Thyroid gland (tissue), 4 donors: ENCODE measurements at regions of chr7 and their contacts with region 1.

Region 1: DNA sequence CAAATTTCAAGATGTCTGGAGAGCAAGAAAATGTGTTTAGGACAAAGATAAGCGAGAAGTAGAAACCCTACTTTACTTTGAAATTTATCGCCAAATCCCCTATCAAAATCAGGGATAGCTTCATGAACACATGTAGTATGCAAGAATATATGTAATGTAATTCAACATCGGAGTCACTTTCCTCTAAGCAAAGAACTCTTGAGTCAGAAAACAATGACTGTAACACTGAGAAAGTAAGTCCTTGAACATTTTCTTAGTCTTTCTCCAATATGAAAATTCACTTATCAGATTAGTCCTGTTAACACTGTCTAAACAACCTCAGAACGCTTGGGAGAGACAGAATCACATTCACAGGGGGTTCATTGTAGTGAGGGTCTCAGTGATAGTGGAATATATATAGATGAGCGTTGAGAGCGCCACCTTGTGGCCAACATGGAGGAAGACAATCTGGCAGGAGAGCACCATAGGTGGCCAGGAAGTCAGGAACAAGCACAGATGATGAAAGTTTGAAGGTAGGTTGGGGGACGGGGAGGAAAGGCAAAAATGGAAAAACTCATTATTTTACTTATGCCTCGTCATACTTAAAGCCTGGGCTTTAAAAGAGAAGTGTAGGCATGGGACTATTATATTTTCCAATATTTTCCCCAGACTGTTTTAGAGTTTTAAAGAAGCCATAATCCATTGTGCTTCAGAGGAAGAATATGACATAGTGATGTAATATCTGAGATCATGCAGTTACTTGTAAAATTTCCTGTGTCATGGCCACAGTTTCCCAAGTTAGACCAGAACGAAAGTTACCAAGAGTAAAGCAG is 115.5 kb upstream of the GNAI1 start:
- DNase-seq: peak; percentile 30 to 56
- H3K4me3 ChIP-seq: no peak overlapping the region
- H3K27ac ChIP-seq: no peak overlapping the region
- H3K4me1 ChIP-seq: no peaks in the 10 kb centered on the region
- H3K27me3 ChIP-seq: no peaks in the 10 kb centered on the region
- CTCF ChIP-seq: peak; percentile 46 to 84 (median 70)
- POLR2A ChIP-seq: no peak

Region 2: DNA sequence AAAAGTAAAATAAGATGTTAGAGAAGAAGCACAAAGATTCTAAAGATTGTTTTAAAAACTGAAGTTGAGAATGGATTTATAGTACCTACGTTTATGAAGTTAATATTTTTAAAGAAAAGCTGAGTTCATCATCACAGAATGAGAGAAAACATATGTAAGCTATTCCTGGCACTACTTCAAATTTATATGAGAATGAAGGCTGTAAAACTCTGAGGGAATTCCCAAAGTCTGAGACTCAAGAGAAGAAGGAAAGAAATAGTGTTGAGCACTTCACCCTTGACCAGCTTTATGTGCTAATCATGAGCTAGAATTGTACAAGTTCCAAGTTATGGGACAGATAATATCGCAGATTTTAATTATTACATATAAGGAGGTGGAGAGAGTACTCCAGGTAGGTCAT is 208.2 kb before region 1 on chr7:
- intact Hi-C with region 1: loop called (anchors 10 kb)
- DNase-seq: no peak
- H3K4me3 ChIP-seq: no peak overlapping the region
- H3K27ac ChIP-seq: no peak overlapping the region
- H3K4me1 ChIP-seq: no peaks in the 10 kb centered on the region
- H3K27me3 ChIP-seq: no peaks in the 10 kb centered on the region
- CTCF ChIP-seq: no peak
- POLR2A ChIP-seq: no peak